Activated T-helper 2 cell treated with anti-CD3 and anti-CD28 coated beads, Interferon-gamma antibody, Interleukin-2, Interleukin-4, amounts not matched to agents 10 μg/mL and 5 μg/mL and 100 μg/mL, durations not matched to agents 14 hours and 24 hours and 36 hours (primary cell): ENCODE measurements at regions of chr7 and their contacts with region 1.

Region 1: GRCh38 chr7:140673063-140673773 is 473 bp downstream of the ADCK2 start:
- DNase-seq: peak; percentile 61
- H3K4me3 Mint-ChIP-seq: peak overlapping the region; percentile 87
- H3K27ac Mint-ChIP-seq: peak overlapping the region; percentile 90
- H3K4me1 Mint-ChIP-seq: peaks cover 32% of the 10 kb centered on the region
- H3K27me3 Mint-ChIP-seq: no peaks in the 10 kb centered on the region

Region 2: GRCh38 chr7:140696680-140697446 is 23.6 kb after region 1 on chr7 and contains the start of gene NDUFB2:
- intact Hi-C with region 1: loop called (anchors 1 kb)
- DNase-seq: peak; percentile 86
- H3K4me3 Mint-ChIP-seq: peak within 1 kb of the TSS; percentile 99
- H3K27ac Mint-ChIP-seq: peak within 1 kb of the TSS; percentile 99
- H3K4me1 Mint-ChIP-seq: peaks cover 26% of the 10 kb centered on the region
- H3K27me3 Mint-ChIP-seq: no peaks in the 10 kb centered on the region
- total RNA-seq, gene NDUFB2: 172 and 178 TPM in 2 replicates